ENCODE measurements at regions of chr1 and their contacts with region 1.

Region 1: DNA sequence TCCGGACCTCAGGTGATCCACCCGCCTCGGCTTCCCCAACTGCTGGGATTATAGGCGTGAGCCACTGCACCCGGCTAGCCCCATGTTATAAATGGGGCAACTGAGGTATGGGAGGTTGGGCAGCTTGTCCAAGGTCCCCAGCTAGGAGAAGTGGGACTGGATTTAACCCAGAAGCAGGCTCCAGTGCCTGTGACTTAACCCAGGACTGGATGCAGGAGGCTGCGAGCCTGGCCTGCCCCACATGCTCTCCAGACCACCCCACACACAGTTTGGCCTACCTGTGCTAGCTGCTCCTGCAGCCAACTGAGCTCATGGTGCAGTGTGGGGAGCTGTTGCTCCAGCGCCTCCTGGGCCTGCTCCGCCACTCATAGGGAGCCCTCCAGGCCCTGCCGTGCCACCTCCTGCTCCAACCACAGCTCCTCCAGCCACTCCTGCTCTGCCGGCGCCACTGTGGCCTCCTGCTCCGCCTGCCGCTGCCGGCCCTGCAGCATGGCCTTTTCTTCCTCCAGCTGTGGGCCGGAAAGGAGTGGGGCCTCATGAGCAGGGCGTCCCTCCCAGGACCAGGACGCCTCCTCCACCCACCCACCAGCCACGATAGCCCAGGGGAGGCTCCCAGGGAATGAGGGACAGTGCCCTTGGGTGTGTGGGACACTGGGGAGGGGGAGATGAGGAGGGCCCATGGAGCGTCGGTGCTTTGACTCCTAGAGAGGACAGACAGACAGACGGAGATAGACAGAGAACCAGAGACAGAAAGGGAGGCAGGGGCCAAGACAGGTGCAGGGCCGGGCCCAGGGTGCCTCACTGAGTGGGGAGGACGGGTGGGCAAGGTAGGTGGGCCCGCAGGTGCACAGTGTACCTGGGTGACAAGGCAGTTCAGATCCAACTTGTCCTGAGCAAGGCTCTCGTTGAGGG is 12.4 kb upstream of the NBPF1 start:
- DNase-seq: no peak
- ATAC-seq: no peak
- H3K4me3 ChIP-seq: no peak overlapping the region
- H3K27ac ChIP-seq: no peak overlapping the region
- H3K4me1 ChIP-seq: peaks cover 25% of the 10 kb centered on the region
- H3K27me3 ChIP-seq: no peaks in the 10 kb centered on the region
- CTCF ChIP-seq: no peak

Region 2: GRCh38 chr1:16607433-16607851 is 18.3 kb before region 1 on chr1:
- CTCF ChIA-PET with region 1: interaction called, 10 read pairs
- POLR2A ChIA-PET with region 1: interaction called, 6 read pairs
- intact Hi-C with region 1: no loop called
- DNase-seq: no peak
- ATAC-seq: no peak
- H3K4me3 ChIP-seq: no peak overlapping the region
- H3K27ac ChIP-seq: peak overlapping the region; percentile 87
- H3K4me1 ChIP-seq: peaks cover 63% of the 10 kb centered on the region
- H3K27me3 ChIP-seq: no peaks in the 10 kb centered on the region
- CTCF ChIP-seq: no peak

Region 3: DNA sequence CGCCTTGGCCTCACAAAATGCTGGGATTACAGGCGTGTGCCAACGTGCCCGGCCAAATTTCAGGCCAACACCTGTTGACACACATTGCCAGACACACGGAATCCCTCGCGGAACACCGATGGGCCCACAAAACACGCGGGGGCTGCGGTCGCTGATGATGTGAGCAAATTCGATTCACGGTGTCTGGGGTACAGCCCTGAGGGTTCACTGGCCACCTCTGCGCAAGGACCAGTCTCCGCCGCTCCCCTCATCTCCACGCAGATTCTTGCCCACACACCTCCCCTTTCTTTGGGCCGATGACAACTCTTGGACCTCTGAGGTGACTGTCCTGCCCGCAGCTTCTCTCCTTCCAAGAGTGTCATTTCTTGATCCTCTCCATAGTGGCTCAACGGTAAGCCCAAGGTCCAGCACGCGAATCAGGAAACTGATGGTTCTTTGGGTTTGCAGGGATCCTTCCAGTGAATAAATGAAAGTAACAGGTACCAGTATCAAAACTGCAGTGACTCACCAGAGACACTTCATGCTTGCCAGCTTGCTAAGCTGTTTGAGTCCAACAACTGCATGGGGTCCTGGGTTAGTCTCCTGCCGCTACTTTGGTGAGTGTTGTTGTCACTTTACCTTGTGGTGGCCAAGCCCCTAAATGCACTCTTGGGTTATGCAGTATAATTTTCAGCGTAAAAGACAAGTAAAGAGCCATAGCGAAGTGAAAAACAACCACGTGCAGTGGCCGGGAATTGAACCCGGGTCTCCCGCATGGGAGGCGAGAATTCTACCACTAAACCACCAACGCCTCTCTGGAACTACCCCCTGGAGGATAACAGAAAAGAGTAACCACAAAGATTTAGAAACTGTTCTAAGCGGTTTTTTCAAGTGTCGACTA is 52.0 kb after region 1 on chr1:
- CTCF ChIA-PET with region 1: no interaction called
- POLR2A ChIA-PET with region 1: no interaction called
- intact Hi-C with region 1: no loop called
- DNase-seq: peak; percentile 84
- ATAC-seq: peak; percentile 99
- H3K4me3 ChIP-seq: no peak overlapping the region
- H3K27ac ChIP-seq: no peak overlapping the region
- H3K4me1 ChIP-seq: no peaks in the 10 kb centered on the region
- H3K27me3 ChIP-seq: no peaks in the 10 kb centered on the region
- CTCF ChIP-seq: no peak

Region 4: DNA sequence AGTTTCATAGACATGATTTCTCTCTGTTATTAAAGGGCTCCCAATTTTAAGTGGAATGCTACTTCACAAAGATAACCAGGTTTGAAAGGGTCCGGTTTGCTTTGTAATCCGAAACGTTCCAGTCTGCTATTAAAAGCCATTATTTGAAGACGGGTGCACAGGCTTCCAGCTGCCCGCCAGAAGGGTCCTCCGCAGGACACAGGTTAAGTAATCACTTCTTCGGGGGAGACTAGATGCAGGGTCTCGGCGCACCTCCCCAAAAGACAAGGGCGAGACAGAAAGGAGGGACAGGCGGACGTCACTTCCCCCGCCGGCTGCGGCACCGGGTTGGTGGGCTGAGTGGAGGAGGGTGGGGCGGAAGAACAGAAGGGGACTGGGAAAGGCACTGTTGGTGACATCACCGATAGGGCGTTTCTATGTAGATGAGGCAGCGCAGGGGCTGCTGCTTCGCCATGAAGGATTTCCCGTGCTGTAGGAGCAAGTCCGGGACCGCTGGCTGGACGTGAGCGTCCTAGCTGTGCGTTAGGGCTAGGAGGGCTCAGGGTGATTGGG is 278.9 kb after region 1 on chr1:
- CTCF ChIA-PET with region 1: interaction called, 5 read pairs
- POLR2A ChIA-PET with region 1: no interaction called
- intact Hi-C with region 1: loop called (anchors 2 kb)
- DNase-seq: peak; percentile 95
- ATAC-seq: peak; percentile 96
- H3K4me3 ChIP-seq: peak overlapping the region; percentile 83
- H3K27ac ChIP-seq: peak overlapping the region; percentile 97
- H3K4me1 ChIP-seq: peaks cover 16% of the 10 kb centered on the region; the same call in 1 of the 2 replicates
- H3K27me3 ChIP-seq: no peaks in the 10 kb centered on the region
- CTCF ChIP-seq: no peak

Region 5: DNA sequence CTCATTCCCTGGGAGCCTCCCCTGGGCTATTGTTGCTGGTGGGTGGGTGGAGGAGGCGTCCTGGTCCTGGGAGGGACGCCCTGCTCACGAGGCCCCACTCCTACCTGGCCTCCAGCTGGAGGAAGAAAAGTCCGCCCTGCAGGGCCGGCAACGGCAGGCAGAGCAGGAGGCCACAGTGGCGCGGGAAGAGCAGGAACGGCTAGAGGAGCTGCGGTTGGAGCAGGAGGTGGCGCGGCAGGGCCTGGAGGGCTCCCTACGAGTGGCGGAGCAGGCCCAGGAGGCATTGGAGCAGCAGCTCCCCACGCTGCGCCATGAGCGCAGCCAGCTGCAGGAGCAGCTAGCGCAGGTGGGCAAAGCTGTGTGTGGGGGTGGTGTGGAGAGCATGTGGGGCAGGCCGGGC is 320.9 kb after region 1 on chr1:
- CTCF ChIA-PET with region 1: interaction called, 18 read pairs
- POLR2A ChIA-PET with region 1: interaction called, 4 read pairs
- intact Hi-C with region 1: no loop called
- DNase-seq: no peak
- ATAC-seq: no peak
- H3K4me3 ChIP-seq: no peak overlapping the region
- H3K27ac ChIP-seq: no peak overlapping the region
- H3K4me1 ChIP-seq: peaks cover 20% of the 10 kb centered on the region
- H3K27me3 ChIP-seq: no peaks in the 10 kb centered on the region
- CTCF ChIP-seq: no peak

Measured in PC-3 (cell line).